ENCODE measurements at regions of chr11 and their contacts with region 1.

Region 1: DNA sequence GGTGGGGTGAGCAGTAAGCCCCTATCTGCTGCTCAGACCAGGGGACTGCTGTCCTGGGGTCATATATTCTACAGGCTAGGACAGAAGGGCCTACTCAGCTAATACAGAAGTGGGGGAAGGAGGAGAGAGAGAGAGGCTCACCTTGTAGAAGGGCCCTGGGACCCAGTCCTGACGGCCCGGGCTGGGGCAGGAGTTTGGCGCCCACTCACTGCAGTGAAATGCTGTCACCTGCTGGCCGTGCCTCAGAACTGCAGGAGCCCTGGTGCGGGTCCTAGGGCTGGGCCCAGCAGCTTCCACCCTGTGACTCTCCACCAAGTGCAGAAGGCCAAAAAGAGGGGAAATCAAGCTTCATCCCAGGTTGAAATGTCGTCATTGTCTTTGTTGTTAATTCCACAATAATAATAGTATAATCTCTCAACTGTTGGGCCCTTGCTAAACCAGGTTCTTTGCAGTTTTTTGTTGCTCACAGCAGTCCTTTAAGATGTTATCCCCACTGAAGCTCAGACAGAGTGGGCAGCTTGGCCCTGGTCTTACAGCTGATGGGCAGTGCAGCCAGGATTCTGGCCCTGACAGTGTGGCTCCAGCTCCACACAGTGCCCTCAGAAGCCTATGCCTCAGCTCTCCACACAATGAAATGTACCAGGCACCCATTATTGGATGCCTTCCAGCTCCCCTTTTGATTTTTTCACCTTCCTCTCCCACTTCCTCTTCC is 29.6 kb downstream of the TRIM29 start:
- DNase-seq: peak; percentile 50
- H3K4me3 ChIP-seq: no peak overlapping the region
- H3K27ac ChIP-seq: no peak overlapping the region
- H3K4me1 ChIP-seq: peaks cover 5% of the 10 kb centered on the region
- H3K27me3 ChIP-seq: no peaks in the 10 kb centered on the region
- CTCF ChIP-seq: peak; percentile 99 to 100

Region 2: DNA sequence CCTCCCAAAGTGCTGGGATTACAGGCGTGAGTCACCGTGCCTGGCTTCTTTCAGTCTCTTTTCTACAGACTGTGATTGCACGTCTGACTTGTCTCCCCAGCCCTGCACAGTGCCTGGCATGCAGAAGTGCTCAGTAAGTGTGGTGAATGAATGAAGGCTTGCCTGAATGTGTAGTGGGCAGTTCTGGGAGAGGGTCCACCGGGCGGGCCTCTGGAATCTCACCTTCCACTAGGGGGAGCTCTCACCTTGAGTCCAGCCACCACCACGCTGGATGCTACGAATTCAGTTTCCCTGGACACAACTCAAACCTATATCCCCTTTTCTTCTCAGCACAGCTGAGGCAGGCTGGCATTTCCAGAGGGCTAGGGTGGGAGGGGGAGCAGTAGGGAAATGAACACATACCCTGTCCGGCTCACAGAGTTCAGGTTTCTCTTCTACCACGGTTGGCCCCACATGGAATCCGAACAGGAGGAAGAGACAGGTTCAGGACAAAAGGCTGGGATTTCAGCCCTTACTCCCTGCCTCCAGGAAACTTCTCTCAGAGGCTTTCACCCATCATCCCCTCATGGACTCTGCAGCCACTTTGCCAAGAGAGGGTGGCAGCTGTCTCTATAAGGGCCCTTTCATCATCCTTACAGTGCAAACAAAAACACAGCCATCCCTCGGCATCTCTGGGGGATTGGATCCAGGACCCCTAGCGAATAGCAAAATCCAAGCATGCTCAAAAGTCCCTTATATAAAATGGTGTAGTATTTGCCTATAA is 466.1 kb before region 1 on chr11:
- CTCF ChIA-PET with region 1: no interaction called
- dilution Hi-C with region 1: loop called (anchors 5 kb)
- in situ Hi-C with region 1: no loop called
- intact Hi-C with region 1: loop called (anchors 1 kb)
- DNase-seq: peak; percentile 15
- H3K4me3 ChIP-seq: no peak overlapping the region
- H3K27ac ChIP-seq: no peak overlapping the region
- H3K4me1 ChIP-seq: no peaks in the 10 kb centered on the region
- H3K27me3 ChIP-seq: no peaks in the 10 kb centered on the region
- CTCF ChIP-seq: peak; percentile 59 to 84

Region 3: GRCh38 chr11:119721129-119722120 is 386.9 kb before region 1 on chr11:
- CTCF ChIA-PET with region 1: no interaction called
- dilution Hi-C with region 1: loop called (anchors 5 kb)
- in situ Hi-C with region 1: loop called in 1 of 2 experiments (anchors 25 kb)
- intact Hi-C with region 1: no loop called
- DNase-seq: peak; percentile 85
- H3K4me3 ChIP-seq: peak overlapping the region in 1 of 3 experiments; percentile 4
- H3K27ac ChIP-seq: peak overlapping the region; percentile 12
- H3K4me1 ChIP-seq: peaks cover 68% of the 10 kb centered on the region
- H3K27me3 ChIP-seq: no peaks in the 10 kb centered on the region
- CTCF ChIP-seq: peak; percentile 57 to 72

Region 4: GRCh38 chr11:119752345-119752871 is 355.9 kb before region 1 on chr11:
- CTCF ChIA-PET with region 1: no interaction called
- dilution Hi-C with region 1: no loop called
- in situ Hi-C with region 1: loop called in 1 of 2 experiments (anchors 25 kb)
- intact Hi-C with region 1: loop called (anchors 5 kb)
- DNase-seq: peak; percentile 74
- H3K4me3 ChIP-seq: no peak overlapping the region
- H3K27ac ChIP-seq: no peak overlapping the region
- H3K4me1 ChIP-seq: peaks cover 27% of the 10 kb centered on the region
- H3K27me3 ChIP-seq: no peaks in the 10 kb centered on the region
- CTCF ChIP-seq: peak; percentile 12 to 45

Region 5: GRCh38 chr11:120013325-120014270 is 94.7 kb before region 1 on chr11:
- CTCF ChIA-PET with region 1: no interaction called
- dilution Hi-C with region 1: no loop called
- in situ Hi-C with region 1: loop called (anchors 5 to 10 kb)
- intact Hi-C with region 1: loop called (anchors 1 kb)
- DNase-seq: peak; percentile 40
- H3K4me3 ChIP-seq: no peak overlapping the region
- H3K27ac ChIP-seq: no peak overlapping the region
- H3K4me1 ChIP-seq: no peaks in the 10 kb centered on the region
- H3K27me3 ChIP-seq: peaks cover 2% of the 10 kb centered on the region
- CTCF ChIP-seq: peak; percentile 87 to 98

Region 6: DNA sequence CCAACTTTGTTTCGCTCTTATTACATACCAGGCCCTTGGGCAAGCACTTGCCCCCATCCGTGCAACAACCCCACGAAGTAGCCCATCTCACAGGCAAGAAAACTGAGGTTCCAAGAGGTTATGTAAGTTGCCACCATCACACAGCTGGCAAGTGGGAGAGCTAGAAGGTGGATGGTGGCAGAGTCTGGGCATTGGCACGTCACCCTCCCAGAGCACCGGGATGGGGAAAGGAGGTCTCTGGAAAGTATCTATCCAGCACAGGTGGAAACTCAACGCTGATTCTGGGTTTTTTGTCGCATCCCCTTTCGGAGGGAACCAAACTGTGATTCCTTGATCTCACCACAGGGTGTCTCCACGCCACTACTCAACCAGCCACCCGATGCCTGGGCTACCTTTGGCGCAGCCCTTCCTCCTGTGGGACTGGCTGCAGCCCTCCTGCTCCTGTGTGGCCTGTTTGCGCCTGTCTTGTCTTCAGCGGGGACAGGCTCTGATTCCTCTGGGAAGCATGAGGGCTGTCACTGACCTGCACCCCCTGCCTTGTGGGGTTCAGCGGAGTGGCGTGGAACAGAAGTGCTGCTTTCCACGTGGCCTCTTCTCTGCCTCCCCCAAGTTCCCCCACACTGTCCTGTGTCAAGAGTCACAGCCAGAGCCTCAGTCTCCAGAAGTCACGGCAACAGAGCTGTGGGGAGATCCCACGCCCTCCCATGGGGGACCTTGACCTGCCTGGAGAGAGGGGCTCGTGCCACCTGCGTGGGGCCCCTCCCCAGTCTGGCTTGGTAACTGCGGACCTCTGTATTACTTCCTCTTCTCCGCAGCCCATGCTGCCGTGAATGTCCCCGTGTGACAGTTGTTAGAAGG is 64.0 kb after region 1 on chr11:
- CTCF ChIA-PET with region 1: interaction called, 4 read pairs
- dilution Hi-C with region 1: loop called (anchors 5 kb)
- in situ Hi-C with region 1: no loop called
- intact Hi-C with region 1: loop called (anchors 1 kb)
- DNase-seq: peak; percentile 52
- H3K4me3 ChIP-seq: no peak overlapping the region
- H3K27ac ChIP-seq: no peak overlapping the region
- H3K4me1 ChIP-seq: peaks cover 16% of the 10 kb centered on the region
- H3K27me3 ChIP-seq: no peaks in the 10 kb centered on the region
- CTCF ChIP-seq: peak; percentile 65 to 93

Region 7: DNA sequence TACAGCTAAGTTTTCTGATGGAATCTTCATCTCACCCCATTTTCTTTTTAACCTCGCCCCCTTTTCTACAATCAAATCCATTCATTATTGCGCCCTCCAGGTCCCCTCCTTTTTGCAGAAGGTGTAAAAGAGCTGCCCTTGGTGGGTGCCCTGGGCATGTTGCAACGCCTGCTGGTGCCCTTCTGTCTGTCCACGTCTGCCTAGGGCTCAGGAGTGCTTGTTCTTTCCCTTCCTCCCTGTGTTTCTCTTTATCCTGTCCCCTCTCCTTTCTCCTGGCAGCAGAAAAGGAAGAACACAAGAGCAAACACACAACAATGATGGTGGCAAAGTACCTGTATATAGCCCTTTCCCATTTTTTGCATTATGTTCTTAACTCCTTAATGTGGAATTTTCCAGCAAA is 210.6 kb after region 1 on chr11:
- CTCF ChIA-PET with region 1: interaction called, 10 read pairs
- dilution Hi-C with region 1: no loop called
- in situ Hi-C with region 1: no loop called
- intact Hi-C with region 1: no loop called
- DNase-seq: no peak
- H3K4me3 ChIP-seq: no peak overlapping the region
- H3K27ac ChIP-seq: no peak overlapping the region
- H3K4me1 ChIP-seq: peaks cover 15% of the 10 kb centered on the region
- H3K27me3 ChIP-seq: no peaks in the 10 kb centered on the region
- CTCF ChIP-seq: no peak